ENCODE measurements at regions of chr6 and their contacts with region 1.

Region 1: DNA sequence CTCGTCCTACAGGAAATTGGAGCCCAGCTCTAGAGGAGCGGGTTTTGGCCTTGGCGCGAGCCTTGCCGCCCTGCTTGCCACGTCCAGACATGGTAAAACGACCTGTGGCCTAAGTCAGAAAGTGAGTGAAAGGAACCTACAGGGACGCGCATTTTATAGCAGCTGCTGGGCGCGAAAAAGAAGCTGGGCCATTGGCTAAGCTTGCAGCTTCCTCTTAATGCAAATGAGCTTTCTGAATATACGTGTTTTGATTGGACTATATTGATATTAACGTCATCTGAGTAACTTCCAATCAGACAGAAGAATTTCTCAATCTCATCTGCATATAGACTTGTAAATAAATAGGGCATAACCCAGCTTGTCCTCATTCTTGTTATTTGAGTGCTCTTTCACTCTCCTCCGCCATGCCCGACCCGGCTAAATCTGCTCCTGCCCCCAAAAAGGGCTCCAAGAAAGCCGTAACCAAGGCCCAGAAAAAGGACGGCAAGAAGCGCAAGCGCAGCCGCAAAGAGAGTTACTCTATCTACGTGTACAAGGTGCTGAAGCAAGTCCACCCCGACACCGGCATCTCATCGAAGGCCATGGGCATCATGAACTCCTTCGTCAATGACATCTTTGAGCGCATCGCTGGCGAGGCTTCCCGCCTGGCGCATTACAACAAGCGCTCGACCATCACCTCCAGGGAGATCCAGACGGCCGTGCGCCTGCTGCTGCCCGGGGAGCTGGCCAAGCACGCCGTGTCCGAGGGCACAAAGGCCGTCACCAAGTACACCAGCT is 18.9 kb downstream of the OR2B2 start:
- DNase-seq: peak; percentile 71 to 80 (median 74)
- ATAC-seq: peak; percentile 27 to 78 (median 64)
- H3K4me3 ChIP-seq: peak overlapping the region; percentile 33 to 89 (median 74)
- H3K27ac ChIP-seq: peak overlapping the region in 10 of 12 donors; percentile 18 to 91 (median 33)
- H3K4me1 ChIP-seq: peaks cover 0 to 36% (median 18%) of the 10 kb centered on the region in 12 donors
- H3K27me3 ChIP-seq: peaks cover 0 to 50% (median 20%) of the 10 kb centered on the region in 9 donors
- CTCF ChIP-seq: no peak
- POLR2A ChIP-seq: peak in 1 of 2 donors; percentile 82

Region 2: GRCh38 chr6:27126815-27127537 is 766.3 kb before region 1 on chr6:
- intact Hi-C with region 1: loop called in 1 of 10 experiments (anchors 10 kb)
- DNase-seq: peak; percentile 91 to 95 (median 92)
- ATAC-seq: peak; percentile 88 to 95 (median 91)
- H3K4me3 ChIP-seq: peak overlapping the region in 11 of 12 donors; percentile 5 to 54 (median 47)
- H3K27ac ChIP-seq: peak overlapping the region in 11 of 12 donors; percentile 5 to 80 (median 67)
- H3K4me1 ChIP-seq: peaks cover 0 to 17% (median 4%) of the 10 kb centered on the region in 12 donors
- H3K27me3 ChIP-seq: no peaks in the 10 kb centered on the region
- CTCF ChIP-seq: peak; percentile 77 to 96 (median 90)
- POLR2A ChIP-seq: peak in 1 of 2 donors; percentile 23

Region 3: GRCh38 chr6:27188885-27189418 is 704.3 kb before region 1 on chr6:
- intact Hi-C with region 1: loop called in 6 of 10 experiments (anchors 1 to 10 kb)
- DNase-seq: peak in 4 of 5 donors; percentile 52 to 65 (median 54)
- ATAC-seq: peak; percentile 77 to 97 (median 93)
- H3K4me3 ChIP-seq: peak overlapping the region; percentile 30 to 75 (median 65)
- H3K27ac ChIP-seq: peak overlapping the region in 11 of 12 donors; percentile 45 to 80 (median 65)
- H3K4me1 ChIP-seq: peaks cover 0 to 9% (median 4%) of the 10 kb centered on the region in 12 donors
- H3K27me3 ChIP-seq: peaks cover 0 to 4% (median 0%) of the 10 kb centered on the region in 9 donors
- CTCF ChIP-seq: peak; percentile 65 to 85 (median 78)
- POLR2A ChIP-seq: no peak

Region 4: GRCh38 chr6:27518881-27519795 is 374.1 kb before region 1 on chr6:
- intact Hi-C with region 1: loop called in 6 of 10 experiments (anchors 2 to 10 kb)
- DNase-seq: peak; percentile 50 to 71 (median 55)
- ATAC-seq: peak; percentile 90 to 95 (median 93)
- H3K4me3 ChIP-seq: peak overlapping the region; percentile 43 to 83 (median 70)
- H3K27ac ChIP-seq: peak overlapping the region; percentile 68 to 94 (median 80)
- H3K4me1 ChIP-seq: peaks cover 0 to 13% (median 7%) of the 10 kb centered on the region in 12 donors
- H3K27me3 ChIP-seq: peaks cover 0 to 23% (median 7%) of the 10 kb centered on the region in 9 donors
- CTCF ChIP-seq: peak; percentile 48 to 78 (median 66)
- POLR2A ChIP-seq: no peak

Region 5: GRCh38 chr6:27809939-27810767 is 83.1 kb before region 1 on chr6:
- intact Hi-C with region 1: loop called in 2 of 10 experiments (anchors 5 kb)
- DNase-seq: peak; percentile 58 to 78 (median 73)
- ATAC-seq: peak; percentile 72 to 87 (median 82)
- H3K4me3 ChIP-seq: peak overlapping the region; percentile 32 to 77 (median 64)
- H3K27ac ChIP-seq: peak overlapping the region; percentile 25 to 96 (median 76)
- H3K4me1 ChIP-seq: peaks cover 0 to 63% (median 10%) of the 10 kb centered on the region in 12 donors
- H3K27me3 ChIP-seq: peaks cover 0 to 81% (median 8%) of the 10 kb centered on the region in 9 donors
- CTCF ChIP-seq: no peak
- POLR2A ChIP-seq: peak; percentile 69 to 98

Region 6: GRCh38 chr6:28981833-28982475 is 1088.7 kb after region 1 on chr6:
- intact Hi-C with region 1: loop called in 1 of 10 experiments (anchors 10 kb)
- DNase-seq: peak; percentile 70 to 85 (median 76)
- ATAC-seq: peak; percentile 74 to 85 (median 80)
- H3K4me3 ChIP-seq: peak overlapping the region; percentile 52 to 78 (median 68)
- H3K27ac ChIP-seq: peak overlapping the region; percentile 29 to 84 (median 73)
- H3K4me1 ChIP-seq: peaks cover 0 to 38% (median 6%) of the 10 kb centered on the region in 12 donors
- H3K27me3 ChIP-seq: peaks cover 0 to 15% (median 9%) of the 10 kb centered on the region in 9 donors
- CTCF ChIP-seq: peak in 7 of 12 donors; percentile 3 to 40 (median 13)
- POLR2A ChIP-seq: peak in 1 of 2 donors; percentile 10